ENCODE measurements at regions of chr16 and their contacts with region 1.

Region 1: DNA sequence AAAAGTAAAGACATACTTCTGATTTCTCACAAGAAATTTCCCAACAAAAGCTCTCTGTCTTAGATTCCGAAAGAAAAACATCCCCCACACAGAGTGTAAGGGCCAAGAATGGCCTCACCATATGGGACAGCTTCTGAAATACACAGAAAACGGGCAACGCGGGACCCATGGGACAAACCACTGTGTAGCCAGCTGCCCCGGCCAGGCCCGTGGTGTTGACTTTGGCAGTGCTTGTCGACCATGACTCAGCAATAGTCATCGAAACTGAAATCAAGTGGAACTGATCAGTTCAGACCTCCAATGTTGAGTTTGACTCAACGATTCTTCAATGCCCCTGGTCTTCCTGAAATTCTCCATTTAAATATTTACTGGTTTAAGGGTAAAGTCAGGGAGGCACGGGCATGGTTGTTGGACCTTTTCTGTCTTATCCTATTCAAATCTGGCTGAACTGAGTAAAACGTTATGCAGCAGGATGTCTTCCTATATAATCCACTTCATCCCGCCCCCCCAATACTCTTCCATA is 27.5 kb downstream of the ZFHX3 start:
- DNase-seq: peak; percentile 72 to 74
- ATAC-seq: peak; percentile 63 to 88 (median 76)
- H3K4me3 ChIP-seq: peak overlapping the region in 1 of 10 donors; percentile 7
- H3K27ac ChIP-seq: peak overlapping the region in 8 of 10 donors; percentile 7 to 79 (median 64)
- H3K4me1 ChIP-seq: peaks cover 18 to 90% (median 50%) of the 10 kb centered on the region in 9 donors
- H3K27me3 ChIP-seq: no peaks in the 10 kb centered on the region
- CTCF ChIP-seq: no peak

Region 2: GRCh38 chr16:72947379-72948237 is 72.8 kb before region 1 on chr16:
- intact Hi-C with region 1: no loop called
- DNase-seq: no peak
- ATAC-seq: peak in 6 of 8 donors; percentile 12 to 49 (median 20)
- H3K4me3 ChIP-seq: no peak overlapping the region
- H3K27ac ChIP-seq: peak overlapping the region in 5 of 10 donors; percentile 35 to 67 (median 54)
- H3K4me1 ChIP-seq: peaks cover 4 to 38% (median 25%) of the 10 kb centered on the region in 9 donors
- H3K27me3 ChIP-seq: no peaks in the 10 kb centered on the region
- CTCF ChIP-seq: no peak

Region 3: DNA sequence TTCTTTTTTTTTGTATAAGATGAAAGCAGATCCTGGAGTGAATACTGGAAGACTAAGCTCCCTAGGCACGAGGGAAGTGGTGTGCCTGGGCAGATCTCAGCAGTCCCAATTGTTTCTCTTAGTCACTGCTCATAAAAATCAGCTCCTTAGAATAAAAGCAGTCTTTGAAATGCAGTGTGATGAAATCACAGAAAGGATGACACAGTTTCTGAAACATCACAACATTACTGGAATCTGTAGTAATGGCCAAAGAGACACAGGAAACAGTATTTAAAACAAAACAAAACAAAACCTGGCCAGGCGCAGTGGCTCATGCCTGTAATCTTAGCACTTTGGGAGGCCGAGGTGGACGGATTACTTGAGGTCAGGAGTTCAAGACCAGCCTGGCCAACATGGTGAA is 62.2 kb after region 1 on chr16:
- intact Hi-C with region 1: loop called in 1 of 10 experiments (anchors 10 kb)
- DNase-seq: no peak
- ATAC-seq: peak in 1 of 8 donors; percentile 89
- H3K4me3 ChIP-seq: no peak overlapping the region
- H3K27ac ChIP-seq: peak overlapping the region in 1 of 10 donors; percentile 61
- H3K4me1 ChIP-seq: peaks cover 0 to 16% (median 0%) of the 10 kb centered on the region in 9 donors
- H3K27me3 ChIP-seq: no peaks in the 10 kb centered on the region
- CTCF ChIP-seq: no peak

Region 4: DNA sequence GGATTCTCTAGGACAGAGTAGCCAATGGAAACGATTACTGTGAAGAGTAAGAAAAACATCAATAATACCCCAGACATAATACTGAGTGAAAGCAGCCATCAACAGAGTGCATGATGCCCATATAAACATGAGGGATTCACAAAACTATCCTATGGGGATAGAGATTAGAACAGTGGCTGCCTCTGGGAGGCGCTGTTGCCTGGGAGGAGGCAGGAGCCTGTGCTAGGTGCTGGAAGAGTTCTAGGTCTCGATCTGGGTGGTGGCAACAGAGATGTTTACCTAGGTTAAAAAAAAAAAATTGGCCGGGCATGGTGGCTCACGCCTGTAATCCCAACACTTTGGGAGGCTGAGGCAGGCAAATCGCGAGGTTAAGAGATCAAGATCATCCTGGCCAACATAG is 1746.3 kb after region 1 on chr16:
- intact Hi-C with region 1: loop called in 1 of 10 experiments (anchors 5 kb)
- DNase-seq: no peak
- ATAC-seq: no peak
- H3K4me3 ChIP-seq: no peak overlapping the region
- H3K27ac ChIP-seq: no peak overlapping the region
- H3K4me1 ChIP-seq: no peaks in the 10 kb centered on the region
- H3K27me3 ChIP-seq: peaks cover 0 to 66% (median 30%) of the 10 kb centered on the region in 7 donors
- CTCF ChIP-seq: no peak

Measured in heart right ventricle (tissue), 16 donors.